Right cardiac atrium (tissue), 5 donors: ENCODE measurements at regions of chr12 and their contacts with region 1.

Region 1: DNA sequence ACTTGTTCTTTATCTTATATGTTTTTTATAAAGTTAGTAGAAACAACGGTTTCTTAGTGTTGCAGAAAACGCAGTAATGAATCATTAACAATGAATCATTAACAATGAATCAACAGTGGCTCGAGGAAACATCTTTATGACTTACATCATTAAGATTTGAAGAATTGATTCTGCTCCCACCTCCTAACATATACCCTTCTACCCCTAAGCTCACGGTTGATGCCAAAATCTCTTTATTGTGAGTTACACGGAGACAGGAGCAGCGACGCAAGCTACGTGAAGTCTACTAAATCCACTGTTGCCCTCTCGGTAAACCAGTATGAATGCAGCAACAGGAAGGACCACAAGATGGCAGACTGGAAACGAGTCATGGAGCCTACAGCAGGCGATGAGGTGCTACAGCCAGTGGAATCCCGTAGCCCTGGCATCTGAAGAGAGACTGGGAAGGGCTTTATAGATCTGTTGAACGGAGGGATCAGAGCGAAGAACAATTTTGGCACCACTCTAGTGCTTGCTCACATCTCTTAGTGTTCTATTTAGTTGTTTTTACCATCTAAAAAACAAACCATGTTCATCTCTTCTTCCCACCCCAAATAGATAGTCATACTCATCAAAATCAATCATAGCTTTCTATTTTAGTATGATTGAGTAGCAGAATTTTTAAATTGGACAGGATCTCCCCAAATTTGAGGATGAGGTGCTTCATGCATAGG is 332.7 kb downstream of the DUSP6 start:
- DNase-seq: peak; percentile 65 to 74 (median 66)
- ATAC-seq: peak; percentile 96 to 97
- H3K4me3 ChIP-seq: peak overlapping the region; percentile 60
- H3K27ac ChIP-seq: no peak overlapping the region
- H3K4me1 ChIP-seq: no peaks in the 10 kb centered on the region
- H3K27me3 ChIP-seq: no peaks in the 10 kb centered on the region

Region 2: DNA sequence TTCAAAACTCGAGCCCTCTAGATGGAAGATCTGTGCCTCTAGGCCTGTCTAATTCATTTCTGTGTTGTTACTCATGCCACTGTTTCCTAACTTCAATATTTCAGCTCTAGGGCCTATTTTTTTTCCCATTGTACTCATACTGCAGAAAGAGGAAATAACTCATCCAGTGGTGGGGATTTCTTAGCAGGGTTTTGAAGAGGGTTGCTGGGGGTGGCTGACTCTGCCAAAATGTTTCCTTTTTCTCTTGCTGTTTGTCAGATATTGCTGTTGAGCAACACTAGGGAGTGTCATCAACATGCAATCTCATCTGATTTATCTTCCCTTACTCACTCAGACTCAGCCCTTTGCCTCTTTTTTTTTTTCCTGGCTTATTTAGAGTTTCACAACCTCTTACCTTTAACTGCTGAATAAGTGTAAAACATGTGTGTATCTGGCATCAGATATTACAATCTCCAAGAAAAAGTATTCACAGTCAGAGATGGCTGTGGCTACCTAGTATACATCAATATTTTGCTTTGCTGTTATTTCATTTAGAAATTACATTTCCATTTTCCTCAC is 143.2 kb after region 1 on chr12:
- intact Hi-C with region 1: no loop called
- DNase-seq: peak; percentile 37 to 61 (median 40)
- ATAC-seq: peak; percentile 86 to 89
- H3K4me3 ChIP-seq: no peak overlapping the region
- H3K27ac ChIP-seq: no peak overlapping the region
- H3K4me1 ChIP-seq: peaks cover 3% of the 10 kb centered on the region
- H3K27me3 ChIP-seq: no peaks in the 10 kb centered on the region

Region 3: GRCh38 chr12:89461649-89462612 is 442.4 kb after region 1 on chr12:
- intact Hi-C with region 1: loop called in 2 of 4 experiments (anchors 2 kb)
- DNase-seq: no peak
- ATAC-seq: peak; percentile 86 to 92
- H3K4me3 ChIP-seq: peak overlapping the region; percentile 34
- H3K27ac ChIP-seq: peak overlapping the region; percentile 78
- H3K4me1 ChIP-seq: no peaks in the 10 kb centered on the region
- H3K27me3 ChIP-seq: no peaks in the 10 kb centered on the region

Region 4: DNA sequence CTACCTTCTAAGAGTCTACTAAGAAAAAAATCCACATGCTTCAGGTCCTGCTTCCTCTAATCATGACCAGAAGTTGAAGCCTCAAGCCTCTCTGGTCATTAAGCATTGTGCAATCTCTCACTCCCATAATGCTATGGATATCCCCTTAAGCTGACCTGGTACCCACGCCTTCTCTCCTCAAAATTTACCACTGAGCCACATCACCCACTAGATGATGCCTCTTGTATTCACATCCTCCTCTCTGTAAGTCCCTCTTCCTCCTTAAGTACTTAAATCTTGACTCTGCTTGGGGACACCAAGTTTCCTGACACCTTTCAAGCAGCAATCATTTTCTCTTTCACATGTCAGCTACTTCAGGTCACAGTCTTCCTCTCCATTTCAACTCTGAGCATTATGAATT is 495.2 kb after region 1 on chr12:
- intact Hi-C with region 1: loop called in 1 of 4 experiments (anchors 5 kb)
- DNase-seq: no peak
- ATAC-seq: no peak
- H3K4me3 ChIP-seq: no peak overlapping the region
- H3K27ac ChIP-seq: no peak overlapping the region
- H3K4me1 ChIP-seq: peaks cover 8% of the 10 kb centered on the region
- H3K27me3 ChIP-seq: no peaks in the 10 kb centered on the region

Region 5: GRCh38 chr12:89529738-89530137 is 510.2 kb after region 1 on chr12:
- intact Hi-C with region 1: loop called in 3 of 4 experiments (anchors 2 to 10 kb)
- DNase-seq: no peak
- ATAC-seq: no peak
- H3K4me3 ChIP-seq: no peak overlapping the region
- H3K27ac ChIP-seq: no peak overlapping the region
- H3K4me1 ChIP-seq: no peaks in the 10 kb centered on the region
- H3K27me3 ChIP-seq: no peaks in the 10 kb centered on the region